ENCODE measurements at regions of chr1 and their contacts with region 1.

Region 1: GRCh38 chr1:156383023-156383422 is 14.0 kb downstream of the RHBG start:
- DNase-seq: peak; percentile 45
- ATAC-seq: peak; percentile 91
- H3K4me3 ChIP-seq: no peak overlapping the region
- H3K27ac ChIP-seq: no peak overlapping the region
- H3K4me1 ChIP-seq: peaks cover 8 to 9% of the 10 kb centered on the region in 2 experiments
- H3K27me3 ChIP-seq: no peaks in the 10 kb centered on the region
- CTCF ChIP-seq: peak; percentile 87 to 92 (median 91)
- POLR2A ChIP-seq: no peak
- RAD21 ChIP-seq: peak; percentile 94

Region 2: GRCh38 chr1:156050416-156050815 is 332.6 kb before region 1 on chr1:
- CTCF ChIA-PET with region 1: no interaction called
- POLR2A ChIA-PET with region 1: no interaction called
- RAD21 ChIA-PET with region 1: no interaction called
- intact Hi-C with region 1: no loop called
- DNase-seq: no peak
- ATAC-seq: no peak
- H3K4me3 ChIP-seq: no peak overlapping the region
- H3K27ac ChIP-seq: no peak overlapping the region
- H3K4me1 ChIP-seq: peaks cover 3 to 13% of the 10 kb centered on the region in 2 experiments; a peak in 3 of 4 replicates
- H3K27me3 ChIP-seq: no peaks in the 10 kb centered on the region
- CTCF ChIP-seq: no peak
- POLR2A ChIP-seq: no peak
- RAD21 ChIP-seq: no peak

Region 3: GRCh38 chr1:156394835-156395461 is 11.9 kb after region 1 on chr1:
- CTCF ChIA-PET with region 1: interaction called, 21 read pairs
- POLR2A ChIA-PET with region 1: no interaction called
- RAD21 ChIA-PET with region 1: interaction called in 1 of 2 experiments, 6 read pairs
- intact Hi-C with region 1: no loop called
- DNase-seq: no peak
- ATAC-seq: no peak
- H3K4me3 ChIP-seq: no peak overlapping the region
- H3K27ac ChIP-seq: no peak overlapping the region
- H3K4me1 ChIP-seq: peaks cover 14 to 53% of the 10 kb centered on the region in 2 experiments
- H3K27me3 ChIP-seq: no peaks in the 10 kb centered on the region
- CTCF ChIP-seq: no peak
- POLR2A ChIP-seq: no peak
- RAD21 ChIP-seq: no peak

Region 4: GRCh38 chr1:156421062-156421938 is 38.3 kb after region 1 on chr1:
- CTCF ChIA-PET with region 1: interaction called, 24 read pairs
- POLR2A ChIA-PET with region 1: interaction called, 4 read pairs
- RAD21 ChIA-PET with region 1: interaction called in 1 of 2 experiments, 6 read pairs
- intact Hi-C with region 1: no loop called
- DNase-seq: peak; percentile 71
- ATAC-seq: peak; percentile 92
- H3K4me3 ChIP-seq: peak overlapping the region; percentile 69 to 73
- H3K27ac ChIP-seq: peak overlapping the region; percentile 76
- H3K4me1 ChIP-seq: peaks cover 10 to 46% of the 10 kb centered on the region in 2 experiments; a peak in 3 of 4 replicates
- H3K27me3 ChIP-seq: no peaks in the 10 kb centered on the region
- CTCF ChIP-seq: no peak
- POLR2A ChIP-seq: peak; percentile 93
- RAD21 ChIP-seq: no peak

Region 5: GRCh38 chr1:156430303-156430702 is 47.3 kb after region 1 on chr1:
- CTCF ChIA-PET with region 1: interaction called, 14 read pairs
- POLR2A ChIA-PET with region 1: no interaction called
- RAD21 ChIA-PET with region 1: no interaction called
- intact Hi-C with region 1: no loop called
- DNase-seq: no peak
- ATAC-seq: no peak
- H3K4me3 ChIP-seq: no peak overlapping the region
- H3K27ac ChIP-seq: no peak overlapping the region
- H3K4me1 ChIP-seq: no peaks in the 10 kb centered on the region
- H3K27me3 ChIP-seq: peaks cover 8% of the 10 kb centered on the region; the same call in 1 of the 2 replicates
- CTCF ChIP-seq: no peak
- POLR2A ChIP-seq: no peak
- RAD21 ChIP-seq: no peak

Region 6: DNA sequence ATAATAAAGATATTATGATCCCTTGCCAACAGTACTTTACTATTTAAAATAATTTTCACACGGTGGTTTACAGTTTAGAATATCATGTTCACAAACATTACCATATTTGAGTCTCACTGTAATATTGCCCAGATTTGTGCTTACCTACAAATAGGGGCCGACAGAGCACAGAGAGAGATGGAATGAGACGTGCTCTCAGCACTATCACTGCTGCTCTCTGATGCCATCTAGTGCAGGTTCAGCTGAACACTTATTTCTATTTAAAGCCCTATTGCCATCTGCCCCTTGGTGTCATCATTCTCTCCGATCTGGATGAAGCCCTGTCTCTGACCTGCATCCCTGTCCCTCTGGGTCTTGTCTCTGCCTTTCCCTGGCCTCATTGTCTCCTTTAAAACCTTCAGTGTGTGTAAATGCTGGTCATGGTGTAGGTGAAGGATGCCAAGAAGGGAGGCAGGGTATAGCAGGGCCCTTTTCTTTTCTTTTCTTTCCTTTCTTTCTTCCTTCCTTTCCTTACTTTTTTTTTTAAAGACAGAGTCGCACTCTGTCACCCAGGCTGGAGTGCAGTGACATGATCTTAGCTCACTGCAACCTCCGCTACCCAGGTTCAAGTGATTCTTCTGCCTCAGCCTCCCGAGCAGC is 225.1 kb after region 1 on chr1:
- CTCF ChIA-PET with region 1: interaction called, 7 read pairs
- POLR2A ChIA-PET with region 1: no interaction called
- RAD21 ChIA-PET with region 1: interaction called in 1 of 2 experiments, 3 read pairs
- intact Hi-C with region 1: loop called (anchors 2 kb)
- DNase-seq: peak; percentile 66
- ATAC-seq: peak; percentile 95
- H3K4me3 ChIP-seq: no peak overlapping the region
- H3K27ac ChIP-seq: no peak overlapping the region
- H3K4me1 ChIP-seq: peaks cover under 1 to 17% of the 10 kb centered on the region in 2 experiments; a peak in 3 of 4 replicates
- H3K27me3 ChIP-seq: no peaks in the 10 kb centered on the region
- CTCF ChIP-seq: peak; percentile 79 to 95 (median 80)
- POLR2A ChIP-seq: no peak
- RAD21 ChIP-seq: peak; percentile 88

Measured in HCT116 (cell line).